Activated naive CD4-positive, alpha-beta T cell treated with anti-CD3 and anti-CD28 coated beads for 36 hours (primary cell): ENCODE measurements at regions of chr14 and their contacts with region 1.

Region 1: GRCh38 chr14:36070031-36070719 is 106.3 kb downstream of the PTCSC3 start:
- DNase-seq: peak; percentile 70
- H3K4me3 Mint-ChIP-seq: no peak overlapping the region
- H3K27ac Mint-ChIP-seq: no peak overlapping the region
- H3K4me1 Mint-ChIP-seq: no peaks in the 10 kb centered on the region
- H3K27me3 Mint-ChIP-seq: peaks cover 21% of the 10 kb centered on the region

Region 2: DNA sequence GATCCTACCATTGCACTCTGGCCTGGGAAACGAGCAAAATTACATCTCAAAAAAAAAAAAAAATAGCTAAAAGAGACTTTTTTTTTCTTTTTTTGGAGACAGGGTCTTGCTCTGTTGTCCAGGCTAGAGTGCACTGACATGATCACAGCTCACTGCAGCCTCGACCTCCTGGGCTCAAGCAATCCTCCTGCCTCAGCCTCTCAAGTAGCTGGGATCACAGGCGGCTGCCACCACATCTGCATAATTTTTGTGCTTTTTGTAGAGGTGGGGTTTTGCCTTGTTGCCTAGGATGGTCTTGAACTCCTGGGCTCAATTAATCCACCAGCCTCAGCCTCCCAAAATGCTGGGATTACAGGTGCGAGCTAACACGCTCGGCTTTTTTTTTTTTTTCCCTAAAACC is 272.4 kb before region 1 on chr14:
- CTCF ChIA-PET with region 1: no interaction called
- intact Hi-C with region 1: no loop called
- DNase-seq: no peak
- H3K4me3 Mint-ChIP-seq: no peak overlapping the region
- H3K27ac Mint-ChIP-seq: no peak overlapping the region
- H3K4me1 Mint-ChIP-seq: peaks cover 36% of the 10 kb centered on the region
- H3K27me3 Mint-ChIP-seq: no peaks in the 10 kb centered on the region

Region 3: DNA sequence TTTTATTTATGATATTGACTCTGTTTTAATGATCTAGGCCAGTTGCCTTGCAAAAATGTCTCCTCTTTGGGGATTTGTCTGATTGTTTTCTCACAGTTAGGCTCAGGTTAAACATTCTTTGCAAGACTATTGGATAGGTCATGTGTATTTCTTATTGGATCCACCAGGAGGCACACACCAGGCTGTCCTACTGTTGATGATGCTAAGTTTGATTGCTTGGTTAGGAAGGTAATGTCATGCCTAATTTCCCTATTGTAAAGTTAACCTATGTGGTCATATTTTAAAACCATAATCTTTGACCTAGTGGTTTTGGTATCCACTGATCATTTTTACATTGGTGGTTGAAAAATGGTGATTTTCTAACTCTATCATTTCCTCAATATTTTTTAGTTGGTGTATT is 107.0 kb before region 1 on chr14:
- CTCF ChIA-PET with region 1: interaction called, 10 read pairs
- intact Hi-C with region 1: loop called (anchors 2 kb)
- DNase-seq: no peak
- H3K4me3 Mint-ChIP-seq: no peak overlapping the region
- H3K27ac Mint-ChIP-seq: no peak overlapping the region
- H3K4me1 Mint-ChIP-seq: no peaks in the 10 kb centered on the region
- H3K27me3 Mint-ChIP-seq: no peaks in the 10 kb centered on the region

Region 4: GRCh38 chr14:36604757-36605505 is 534.8 kb after region 1 on chr14:
- CTCF ChIA-PET with region 1: no interaction called
- intact Hi-C with region 1: loop called (anchors 1 kb)
- DNase-seq: peak; percentile 69
- H3K4me3 Mint-ChIP-seq: no peak overlapping the region
- H3K27ac Mint-ChIP-seq: no peak overlapping the region
- H3K4me1 Mint-ChIP-seq: no peaks in the 10 kb centered on the region
- H3K27me3 Mint-ChIP-seq: peaks cover 13% of the 10 kb centered on the region